AG04449 (cell line): ENCODE measurements at regions of chr3 and their contacts with region 1.

Region 1: DNA sequence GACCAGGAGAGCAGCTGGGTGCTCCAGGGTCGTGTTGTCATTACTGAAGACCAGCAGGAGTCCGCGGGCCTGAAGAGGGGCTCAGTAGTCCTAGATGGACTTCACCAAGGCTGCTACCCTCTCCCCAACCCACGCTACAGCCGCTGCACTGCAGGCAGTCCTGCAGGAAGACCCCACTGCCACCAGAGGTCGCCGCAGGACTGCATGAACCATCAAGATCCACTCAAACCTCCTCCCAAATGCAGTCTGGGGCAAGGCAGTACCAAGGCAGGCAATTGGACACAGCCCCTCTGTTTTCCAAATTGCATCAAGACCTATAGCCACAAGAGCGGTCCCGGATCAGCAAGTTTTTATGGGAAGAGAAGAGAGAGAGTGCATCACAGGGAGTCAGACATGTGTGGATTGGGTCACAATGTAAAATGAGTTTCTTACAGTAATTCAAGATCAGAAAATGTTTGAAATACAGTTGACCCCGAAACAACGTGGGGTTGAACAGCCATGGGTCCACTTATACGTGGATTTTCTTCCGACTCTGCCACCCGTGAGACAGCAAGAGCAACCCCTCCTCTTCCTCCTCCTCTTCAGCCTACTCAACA is 46.7 kb downstream of the DZIP1L start:
- DNase-seq: no peak
- H3K4me3 ChIP-seq: no peak overlapping the region
- CTCF ChIP-seq: peak; percentile 99

Region 2: GRCh38 chr3:138082085-138082991 is 13.7 kb after region 1 on chr3:
- CTCF ChIA-PET with region 1: interaction called, 75 read pairs
- POLR2A ChIA-PET with region 1: no interaction called
- DNase-seq: peak; percentile 46
- H3K4me3 ChIP-seq: peak overlapping the region; percentile 31
- CTCF ChIP-seq: no peak

Region 3: GRCh38 chr3:138125548-138126221 is 57.0 kb after region 1 on chr3:
- CTCF ChIA-PET with region 1: interaction called, 626 read pairs
- POLR2A ChIA-PET with region 1: no interaction called
- DNase-seq: peak; percentile 5
- H3K4me3 ChIP-seq: no peak overlapping the region
- CTCF ChIP-seq: no peak

Region 4: DNA sequence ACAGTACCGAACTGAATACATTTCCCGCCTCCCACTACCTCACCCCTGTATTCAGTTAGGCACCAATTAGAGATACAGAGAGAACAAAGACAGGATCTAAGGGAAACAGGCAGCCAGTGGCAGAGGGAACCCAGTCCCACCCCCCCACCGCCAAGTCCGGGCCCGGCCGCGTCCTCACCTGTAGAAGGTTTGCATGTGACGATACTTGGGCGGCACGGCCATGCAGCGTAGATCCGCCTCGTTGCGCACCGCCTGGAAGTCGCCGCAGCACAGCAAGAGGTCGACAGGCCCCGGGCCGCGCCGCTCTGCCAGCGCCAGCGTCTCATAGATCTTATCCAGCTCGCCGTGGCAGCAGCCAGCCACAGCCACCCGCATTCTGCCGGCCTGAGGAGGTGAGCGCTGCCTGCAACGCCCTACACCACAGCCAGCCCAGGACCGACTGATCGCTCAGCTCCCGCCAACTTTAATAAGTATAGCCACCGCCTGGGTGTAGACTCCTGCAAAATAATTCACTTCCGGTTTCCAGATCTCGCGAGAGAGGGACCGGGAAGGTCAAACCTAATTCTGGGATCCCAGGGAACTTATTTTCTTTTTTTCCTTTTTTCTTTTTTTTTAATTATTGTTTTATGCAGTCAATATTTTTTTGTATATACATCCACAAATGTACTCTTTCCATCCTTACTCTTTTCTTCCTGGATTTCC is 105.9 kb after region 1 on chr3 and contains the start of gene DBR1:
- CTCF ChIA-PET with region 1: interaction called, 11 read pairs
- POLR2A ChIA-PET with region 1: no interaction called
- DNase-seq: no peak
- H3K4me3 ChIP-seq: peak within 1 kb of the TSS; percentile 93
- CTCF ChIP-seq: no peak